ENCODE measurements at regions of chr12 and their contacts with region 1.

Region 1: DNA sequence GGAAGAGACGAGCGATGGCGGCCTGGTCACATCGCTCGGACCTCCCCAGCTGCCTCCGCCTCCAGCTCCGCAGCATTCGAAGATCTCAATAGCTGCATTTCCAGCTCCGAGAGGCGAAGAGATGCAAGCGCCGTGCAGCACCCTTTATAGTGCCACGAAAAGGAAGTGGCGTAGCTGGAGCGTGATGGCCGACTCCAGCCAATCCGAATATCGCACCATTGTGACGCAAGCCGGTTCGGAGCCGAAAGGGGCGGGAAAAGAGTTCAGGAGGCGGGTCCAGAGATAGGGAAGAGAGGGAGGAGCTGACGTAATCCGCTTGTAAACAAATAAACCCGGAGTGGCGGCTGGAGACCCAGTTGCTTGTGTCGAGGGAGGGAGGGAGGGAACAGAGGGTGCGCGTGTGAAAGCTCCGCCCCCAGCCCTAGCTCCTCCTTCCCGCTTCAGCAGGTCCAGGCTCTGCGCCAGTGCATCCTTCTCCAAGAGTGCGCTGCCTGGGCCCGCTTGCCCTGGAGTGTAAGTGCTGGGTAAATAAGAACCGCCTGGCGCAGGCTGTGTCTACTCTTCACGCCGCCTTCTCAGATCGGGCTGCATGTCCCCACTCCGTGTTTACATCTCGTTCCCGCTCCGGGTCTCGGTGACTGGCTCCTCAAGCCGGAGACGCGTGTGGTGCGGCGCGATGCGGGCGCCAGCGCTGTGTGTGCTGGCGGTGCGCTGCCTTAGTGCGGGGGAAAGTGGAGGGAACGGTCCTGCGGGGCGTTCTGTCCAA is at the start of gene BTG1:
- DNase-seq: peak; percentile 99 to 100
- H3K4me3 ChIP-seq: peak within 1 kb of the TSS; percentile 74 to 97 (median 83)
- H3K27ac ChIP-seq: peak within 1 kb of the TSS; percentile 95 to 100 (median 100)
- H3K4me1 ChIP-seq: peaks cover 0 to 32% (median 11%) of the 10 kb centered on the region in 4 donors
- H3K27me3 ChIP-seq: no peaks in the 10 kb centered on the region
- CTCF ChIP-seq: peak in 1 of 7 experiments; percentile 15
- EP300 ChIP-seq: no peak
- POLR2A ChIP-seq: peak in 2 of 4 donors; percentile 98 to 99
- total RNA-seq, gene BTG1: 20.5 to 108 (median 33.3) TPM

Region 2: DNA sequence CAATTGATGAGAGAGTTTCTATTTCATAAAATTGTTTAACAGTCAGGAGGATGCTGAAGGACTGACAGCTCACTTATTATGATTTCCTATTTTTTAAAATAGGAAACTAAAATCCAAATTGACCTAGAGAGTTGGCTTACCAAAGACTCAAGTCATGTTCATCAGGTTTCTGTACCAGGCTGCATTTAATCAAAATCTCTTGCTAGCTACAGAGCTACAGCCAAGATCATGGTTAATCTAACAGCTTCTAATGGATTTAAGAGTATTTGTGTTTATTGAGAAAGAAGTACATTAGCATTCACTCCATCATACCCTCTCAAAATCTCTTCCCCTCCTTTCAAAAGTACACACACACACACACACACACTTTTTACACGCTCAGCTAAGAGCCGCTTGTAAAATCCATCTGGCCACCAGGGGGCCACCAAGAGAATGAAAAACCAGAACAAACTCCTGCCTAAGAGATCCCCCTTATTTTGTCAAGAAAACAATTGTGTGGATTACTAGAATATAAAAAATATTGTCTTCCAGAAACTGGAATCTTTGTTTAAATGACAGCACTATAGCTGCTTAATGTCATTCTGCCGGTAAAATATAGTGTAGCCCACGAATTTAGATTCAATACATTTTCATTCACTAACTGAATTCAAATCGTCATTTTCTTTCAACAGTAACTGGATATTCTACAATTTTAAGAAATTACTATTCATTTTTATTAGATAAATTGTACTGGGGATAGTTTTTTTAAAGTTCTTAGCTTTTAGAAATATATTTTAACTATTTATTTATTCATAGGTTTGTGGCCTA is 334.2 kb before region 1 on chr12:
- intact Hi-C with region 1: loop called (anchors 10 kb)
- DNase-seq: peak; percentile 76 to 86
- H3K4me3 ChIP-seq: no peak overlapping the region
- H3K27ac ChIP-seq: no peak overlapping the region
- H3K4me1 ChIP-seq: peaks cover 0 to 4% (median 0%) of the 10 kb centered on the region in 4 donors
- H3K27me3 ChIP-seq: no peaks in the 10 kb centered on the region
- CTCF ChIP-seq: peak in 5 of 7 experiments; percentile 61 to 87 (median 83)
- EP300 ChIP-seq: no peak
- POLR2A ChIP-seq: no peak